ENCODE measurements at regions of chr15 and their contacts with region 1.

Region 1: DNA sequence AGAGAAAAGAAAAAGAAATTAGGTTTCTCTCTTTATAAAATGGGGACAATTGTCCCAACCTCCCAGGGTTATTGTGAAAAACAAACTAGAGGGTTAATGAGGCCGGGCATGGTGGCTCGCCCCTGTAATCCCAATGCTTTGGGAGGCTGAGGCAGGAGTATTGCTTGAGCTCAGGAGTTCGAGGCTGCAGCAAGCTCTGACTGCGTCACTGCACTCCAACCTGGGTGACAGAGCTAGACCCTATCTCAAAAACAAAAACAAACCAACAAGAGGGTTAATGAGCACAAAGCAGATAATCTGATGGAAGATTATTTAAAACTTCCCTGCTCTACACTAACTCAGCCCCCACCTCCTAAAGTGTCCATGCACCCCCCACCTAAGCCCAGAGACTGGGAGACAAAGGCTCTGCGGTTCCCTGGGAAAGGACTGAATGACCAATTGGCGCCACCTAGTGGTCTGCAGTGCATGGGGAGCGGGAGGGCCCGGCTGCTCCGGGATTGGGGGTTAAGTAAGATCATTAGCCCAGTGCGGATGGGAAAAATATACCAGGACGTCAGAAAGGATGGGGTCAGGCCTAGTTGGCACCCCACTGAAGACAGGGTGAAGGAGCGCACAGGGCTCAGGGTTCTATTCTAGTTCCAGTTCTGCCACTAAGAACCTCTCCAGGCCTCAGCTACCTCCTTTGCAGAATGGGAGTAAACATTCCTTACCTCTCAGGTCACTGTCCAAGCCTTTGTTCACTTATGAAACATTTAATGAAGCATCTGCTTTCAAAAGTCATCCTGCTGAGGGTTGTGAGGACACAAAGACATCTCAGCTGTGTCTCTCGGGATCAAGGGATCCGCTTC is 15.6 kb downstream of the PIF1 start:
- DNase-seq: peak; percentile 84 to 90 (median 88)
- ATAC-seq: peak; percentile 91
- H3K4me3 ChIP-seq: no peak overlapping the region
- H3K27ac ChIP-seq: no peak overlapping the region
- H3K4me1 ChIP-seq: peaks cover 13% of the 10 kb centered on the region in 2 experiments
- H3K27me3 ChIP-seq: peaks cover 3 to 7% of the 10 kb centered on the region in 2 experiments; a peak in 2 of 5 replicates
- CTCF ChIP-seq: peak; percentile 91 to 96 (median 93)
- EP300 ChIP-seq: no peak
- POLR2A ChIP-seq: no peak
- RAD21 ChIP-seq: peak; percentile 75 to 90

Region 2: GRCh38 chr15:64478863-64479262 is 331.0 kb before region 1 on chr15:
- CTCF ChIA-PET with region 1: no interaction called
- POLR2A ChIA-PET with region 1: no interaction called
- in situ Hi-C with region 1: no loop called
- intact Hi-C with region 1: no loop called
- DNase-seq: no peak
- ATAC-seq: no peak
- H3K4me3 ChIP-seq: no peak overlapping the region
- H3K27ac ChIP-seq: no peak overlapping the region
- H3K4me1 ChIP-seq: no peaks in the 10 kb centered on the region; a peak in 1 of 5 replicates
- H3K27me3 ChIP-seq: no peaks in the 10 kb centered on the region
- CTCF ChIP-seq: no peak
- EP300 ChIP-seq: no peak
- POLR2A ChIP-seq: no peak
- RAD21 ChIP-seq: no peak

Region 3: DNA sequence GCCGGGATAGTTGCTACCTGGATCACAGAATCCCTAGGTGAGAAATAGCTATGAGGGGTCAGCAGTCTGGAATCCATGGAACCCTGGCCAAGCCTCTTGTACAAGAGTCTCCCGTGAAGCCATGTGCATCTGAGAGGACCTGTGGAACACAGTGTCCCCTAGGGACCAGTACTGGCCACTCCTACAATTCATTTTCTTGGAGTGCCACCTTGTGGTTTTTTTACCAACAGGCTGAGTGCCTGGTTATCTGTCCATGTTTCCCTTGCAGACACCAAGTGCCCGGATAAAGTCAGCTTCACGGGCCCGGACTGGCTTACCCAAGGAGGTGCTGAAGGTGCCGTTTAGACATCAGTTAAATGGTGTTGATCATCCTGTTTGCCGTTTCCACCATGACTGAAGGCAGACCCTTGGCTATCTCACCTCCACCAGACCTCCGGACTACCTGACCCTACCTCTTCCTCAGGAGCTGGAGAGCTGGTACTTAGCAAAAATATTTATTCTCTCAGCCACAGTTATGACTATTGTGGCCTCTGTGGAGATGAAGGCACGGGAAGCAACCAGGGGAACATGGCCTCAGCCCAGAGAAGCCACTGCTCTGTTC is 128.3 kb before region 1 on chr15:
- CTCF ChIA-PET with region 1: interaction called, 7 read pairs
- POLR2A ChIA-PET with region 1: no interaction called
- in situ Hi-C with region 1: no loop called
- intact Hi-C with region 1: loop called (anchors 2 kb)
- DNase-seq: peak; percentile 60 to 80 (median 70)
- ATAC-seq: peak; percentile 98
- H3K4me3 ChIP-seq: no peak overlapping the region
- H3K27ac ChIP-seq: no peak overlapping the region
- H3K4me1 ChIP-seq: no peaks in the 10 kb centered on the region; a peak in 1 of 5 replicates
- H3K27me3 ChIP-seq: no peaks in the 10 kb centered on the region
- CTCF ChIP-seq: peak; percentile 91 to 100 (median 99)
- EP300 ChIP-seq: 0 out of 2 replicates have a peak, but pooled peaks have one; percentile 5
- POLR2A ChIP-seq: no peak
- RAD21 ChIP-seq: peak; percentile 93 to 98

Region 4: DNA sequence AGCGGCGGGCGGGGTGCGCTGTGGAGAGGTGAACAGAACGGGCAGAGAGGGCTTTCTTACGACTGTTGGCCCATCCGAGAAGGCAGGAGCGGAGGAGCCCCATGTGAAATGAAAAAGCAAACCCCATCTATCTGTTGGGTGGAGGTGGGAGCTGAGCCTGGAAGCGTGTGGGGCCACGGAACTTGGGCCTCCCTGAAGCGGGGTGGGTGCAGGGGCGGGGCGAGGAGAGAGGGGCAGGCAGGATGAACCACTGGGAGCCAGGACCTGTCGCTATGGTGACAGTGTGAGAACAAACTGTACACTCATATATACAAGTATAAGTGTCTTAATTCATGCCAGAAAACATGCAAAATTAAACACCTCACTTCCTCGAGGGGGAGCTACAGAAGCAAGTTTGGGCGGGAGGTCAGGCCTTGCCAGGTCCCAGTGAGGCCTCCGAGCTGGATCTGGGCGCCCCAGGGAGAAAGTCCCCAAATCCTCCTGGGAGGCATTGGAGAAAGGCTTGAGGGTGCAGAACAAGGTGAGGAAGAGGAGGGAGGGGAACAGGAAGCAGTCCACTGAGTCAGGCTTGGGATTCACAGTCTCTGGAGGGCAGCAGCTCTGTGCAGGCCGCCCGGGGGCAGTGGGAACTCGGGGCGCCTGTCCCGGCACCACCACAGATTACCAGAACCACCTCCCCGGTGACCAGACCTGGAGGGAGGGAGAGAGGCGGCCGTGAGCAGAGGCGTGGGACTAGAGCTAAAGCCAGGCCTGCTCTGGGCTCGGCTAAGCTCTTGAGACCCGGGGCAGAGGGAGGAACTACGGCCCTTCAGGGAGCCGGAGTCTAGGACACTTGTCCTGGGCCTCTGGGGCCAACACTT is 69.3 kb before region 1 on chr15:
- CTCF ChIA-PET with region 1: interaction called, 4 read pairs
- POLR2A ChIA-PET with region 1: interaction called, 4 read pairs
- in situ Hi-C with region 1: no loop called
- intact Hi-C with region 1: loop called (anchors 2 kb)
- DNase-seq: peak; percentile 42 to 55 (median 49)
- ATAC-seq: peak; percentile 80
- H3K4me3 ChIP-seq: no peak overlapping the region
- H3K27ac ChIP-seq: no peak overlapping the region
- H3K4me1 ChIP-seq: peaks cover 0 to 3% of the 10 kb centered on the region in 2 experiments; a peak in 1 of 5 replicates
- H3K27me3 ChIP-seq: peaks cover 25 to 74% of the 10 kb centered on the region in 2 experiments; a peak in 4 of 5 replicates
- CTCF ChIP-seq: peak; percentile 56 to 68 (median 59)
- EP300 ChIP-seq: no peak
- POLR2A ChIP-seq: no peak
- RAD21 ChIP-seq: peak; percentile 29 to 60; a peak in 3 of 4 replicates

Region 5: DNA sequence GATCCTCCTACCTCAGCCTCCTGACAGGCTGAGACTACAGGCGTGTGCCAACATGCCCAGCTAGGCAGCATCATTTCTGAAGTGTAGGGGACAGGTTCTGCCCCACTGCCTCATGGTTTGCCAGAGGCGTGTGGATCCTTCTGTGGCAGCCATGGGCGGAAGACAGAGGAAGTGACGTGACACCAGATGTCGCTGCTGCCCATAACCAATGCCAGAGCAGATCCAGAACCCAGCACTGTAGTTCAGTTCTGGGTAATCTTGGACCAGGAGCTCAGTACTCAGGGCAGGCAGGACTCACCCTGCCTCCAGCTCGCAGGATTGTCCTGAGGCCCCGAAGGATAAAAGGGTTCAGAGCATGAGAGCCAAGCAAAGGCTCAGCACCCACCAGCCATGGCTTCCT is 42.7 kb before region 1 on chr15:
- CTCF ChIA-PET with region 1: interaction called, 3 read pairs
- POLR2A ChIA-PET with region 1: no interaction called
- in situ Hi-C with region 1: no loop called
- intact Hi-C with region 1: loop called (anchors 1 kb)
- DNase-seq: peak in 1 of 4 experiments; percentile 25
- ATAC-seq: peak; percentile 82
- H3K4me3 ChIP-seq: no peak overlapping the region
- H3K27ac ChIP-seq: no peak overlapping the region
- H3K4me1 ChIP-seq: peaks cover 0 to 1% of the 10 kb centered on the region in 2 experiments; a peak in 4 of 5 replicates
- H3K27me3 ChIP-seq: peaks cover 0 to 19% of the 10 kb centered on the region in 2 experiments; a peak in 2 of 5 replicates
- CTCF ChIP-seq: peak; percentile 41 to 43 (median 42); a peak in 4 of 6 replicates
- EP300 ChIP-seq: no peak
- POLR2A ChIP-seq: no peak
- RAD21 ChIP-seq: peak in 1 of 2 experiments; percentile 46; a peak in 2 of 4 replicates

Region 6: GRCh38 chr15:64825431-64826294 is 15.8 kb after region 1 on chr15 and contains the start of gene PIF1:
- CTCF ChIA-PET with region 1: no interaction called
- POLR2A ChIA-PET with region 1: interaction called, 10 read pairs
- in situ Hi-C with region 1: no loop called
- intact Hi-C with region 1: no loop called
- DNase-seq: peak; percentile 91 to 98 (median 94)
- ATAC-seq: peak; percentile 99
- H3K4me3 ChIP-seq: peak within 1 kb of the TSS; percentile 65
- H3K27ac ChIP-seq: peak within 1 kb of the TSS; percentile 88
- H3K4me1 ChIP-seq: peaks cover 8 to 19% of the 10 kb centered on the region in 2 experiments; a peak in 4 of 5 replicates
- H3K27me3 ChIP-seq: no peaks in the 10 kb centered on the region
- CTCF ChIP-seq: no peak
- EP300 ChIP-seq: no peak
- POLR2A ChIP-seq: peak; percentile 91
- RAD21 ChIP-seq: 0 out of 4 replicates have a peak, but pooled peaks of 1 of the 2 experiments have one; percentile 7
- polyA plus RNA-seq, gene PIF1: 1.1 to 1.5 TPM

Region 7: DNA sequence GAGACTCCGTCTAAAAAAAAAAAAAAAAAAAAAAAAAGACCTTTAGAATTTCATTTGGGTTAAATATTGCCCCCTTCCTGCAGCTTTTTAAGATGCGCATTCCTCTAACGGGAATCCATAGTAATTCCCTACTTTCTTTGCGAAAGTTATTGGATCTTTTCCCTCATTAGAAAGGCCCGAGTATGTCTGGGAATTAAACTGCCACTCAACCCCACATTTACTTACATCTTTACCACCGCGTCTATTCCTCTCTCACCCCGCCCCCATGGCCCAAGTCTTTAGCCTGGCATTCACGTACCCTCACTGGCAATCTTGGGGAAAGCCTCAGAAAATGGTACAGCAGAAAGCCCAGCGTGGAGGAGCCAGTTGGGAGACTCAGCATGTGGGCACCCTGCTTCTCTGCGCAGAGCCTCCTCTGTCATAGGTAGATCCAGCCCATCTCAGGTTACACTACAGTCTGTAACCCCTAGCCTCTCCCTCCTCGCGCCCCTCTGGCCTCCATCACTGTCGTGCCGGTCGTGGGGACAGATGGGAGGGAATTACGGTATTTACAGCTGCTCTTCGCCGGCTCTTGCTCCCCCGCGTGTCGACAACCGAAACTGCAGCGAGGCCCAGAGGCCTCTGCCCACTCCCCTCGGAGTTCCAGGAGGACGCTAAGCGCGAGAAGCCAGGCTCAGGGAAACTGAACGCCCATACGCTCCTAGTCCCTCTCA is 95.4 kb after region 1 on chr15:
- CTCF ChIA-PET with region 1: no interaction called
- POLR2A ChIA-PET with region 1: no interaction called
- in situ Hi-C with region 1: no loop called
- intact Hi-C with region 1: loop called (anchors 10 kb)
- DNase-seq: peak; percentile 75 to 81 (median 76)
- ATAC-seq: peak; percentile 99
- H3K4me3 ChIP-seq: no peak overlapping the region
- H3K27ac ChIP-seq: no peak overlapping the region
- H3K4me1 ChIP-seq: peaks cover 0 to 5% of the 10 kb centered on the region in 2 experiments; a peak in 2 of 5 replicates
- H3K27me3 ChIP-seq: peaks cover 0 to 16% of the 10 kb centered on the region in 2 experiments; a peak in 2 of 5 replicates
- CTCF ChIP-seq: peak; percentile 76 to 89 (median 85)
- EP300 ChIP-seq: no peak
- POLR2A ChIP-seq: no peak
- RAD21 ChIP-seq: peak; percentile 58 to 85; a peak in 3 of 4 replicates

Measured in K562 (cell line).